ENCODE measurements at regions of chr14 and their contacts with region 1.

Region 1: GRCh38 chr14:76151398-76152339 is at the start of gene GPATCH2L:
- DNase-seq: peak; percentile 90 to 98 (median 95)
- ATAC-seq: peak; percentile 96
- H3K4me3 ChIP-seq: peak within 1 kb of the TSS; percentile 91
- H3K4me3 Mint-ChIP-seq: peak within 1 kb of the TSS; percentile 89 to 98 (median 95)
- H3K27ac ChIP-seq: peak within 1 kb of the TSS; percentile 95
- H3K27ac Mint-ChIP-seq: peak within 1 kb of the TSS; percentile 86 to 98 (median 96)
- H3K4me1 ChIP-seq: peaks cover 40 to 44% of the 10 kb centered on the region in 2 donors
- H3K4me1 Mint-ChIP-seq: peaks cover 40 to 56% (median 53%) of the 10 kb centered on the region in 7 donors
- H3K27me3 ChIP-seq: no peaks in the 10 kb centered on the region
- H3K27me3 Mint-ChIP-seq: peaks cover 0 to 18% (median 0%) of the 10 kb centered on the region in 5 donors
- total RNA-seq, gene GPATCH2L: 60.4 to 83.1 (median 66.6) TPM

Region 2: GRCh38 chr14:75577729-75578101 is 574.0 kb before region 1 on chr14:
- CTCF ChIA-PET with region 1: no interaction called
- POLR2A ChIA-PET with region 1: no interaction called
- intact Hi-C with region 1: loop called in 1 of 2 experiments (anchors 5 kb)
- DNase-seq: peak; percentile 45 to 71 (median 54)
- ATAC-seq: peak; percentile 92
- H3K4me3 ChIP-seq: peak overlapping the region; percentile 64
- H3K4me3 Mint-ChIP-seq: peak overlapping the region in 5 of 10 donors; percentile 90 to 96 (median 93)
- H3K27ac ChIP-seq: peak overlapping the region; percentile 41
- H3K27ac Mint-ChIP-seq: peak overlapping the region; percentile 34 to 86 (median 75)
- H3K4me1 ChIP-seq: peaks cover 9 to 12% of the 10 kb centered on the region in 2 donors
- H3K4me1 Mint-ChIP-seq: peaks cover 6 to 19% (median 9%) of the 10 kb centered on the region in 7 donors
- H3K27me3 ChIP-seq: no peaks in the 10 kb centered on the region
- H3K27me3 Mint-ChIP-seq: peaks cover 0 to 8% (median 0%) of the 10 kb centered on the region in 5 donors

Region 3: DNA sequence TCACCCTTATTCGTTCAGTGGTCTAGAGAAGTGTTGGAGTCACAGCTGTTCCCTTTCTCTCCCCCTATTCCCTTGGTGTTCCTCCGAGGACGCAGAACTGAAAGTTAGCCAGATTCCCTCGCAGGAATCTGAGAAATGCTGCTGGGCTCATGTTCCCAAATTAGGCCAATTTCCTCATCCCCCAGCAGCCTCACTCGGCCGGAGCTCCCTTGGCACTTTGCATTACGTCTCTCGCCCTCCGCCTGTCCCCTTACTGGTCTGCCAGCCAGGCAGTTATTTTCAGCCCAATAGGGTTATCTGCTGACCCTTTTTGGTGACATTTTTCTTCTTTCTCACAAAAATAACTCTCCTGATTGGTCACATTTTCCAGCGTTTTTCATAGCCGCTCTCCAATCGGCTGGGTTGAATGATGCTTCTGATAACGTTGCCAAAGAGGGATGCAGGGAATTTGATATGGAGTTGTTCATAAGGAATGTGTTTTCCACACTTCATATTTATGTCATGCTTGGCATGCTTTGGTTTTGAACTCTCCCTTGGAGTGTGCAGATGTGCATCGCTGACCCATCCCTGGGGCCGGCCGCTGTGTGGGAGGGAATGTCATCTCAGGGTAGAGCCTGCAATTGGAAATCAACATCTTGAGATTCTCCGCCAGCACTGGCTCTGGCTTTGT is 156.2 kb before region 1 on chr14:
- CTCF ChIA-PET with region 1: no interaction called
- POLR2A ChIA-PET with region 1: no interaction called
- intact Hi-C with region 1: no loop called
- DNase-seq: no peak
- ATAC-seq: no peak
- H3K4me3 ChIP-seq: no peak overlapping the region
- H3K4me3 Mint-ChIP-seq: no peak overlapping the region
- H3K27ac ChIP-seq: no peak overlapping the region
- H3K27ac Mint-ChIP-seq: no peak overlapping the region
- H3K4me1 ChIP-seq: no peaks in the 10 kb centered on the region
- H3K4me1 Mint-ChIP-seq: peaks cover 0 to 5% (median 0%) of the 10 kb centered on the region in 7 donors
- H3K27me3 ChIP-seq: no peaks in the 10 kb centered on the region
- H3K27me3 Mint-ChIP-seq: no peaks in the 10 kb centered on the region

Region 4: DNA sequence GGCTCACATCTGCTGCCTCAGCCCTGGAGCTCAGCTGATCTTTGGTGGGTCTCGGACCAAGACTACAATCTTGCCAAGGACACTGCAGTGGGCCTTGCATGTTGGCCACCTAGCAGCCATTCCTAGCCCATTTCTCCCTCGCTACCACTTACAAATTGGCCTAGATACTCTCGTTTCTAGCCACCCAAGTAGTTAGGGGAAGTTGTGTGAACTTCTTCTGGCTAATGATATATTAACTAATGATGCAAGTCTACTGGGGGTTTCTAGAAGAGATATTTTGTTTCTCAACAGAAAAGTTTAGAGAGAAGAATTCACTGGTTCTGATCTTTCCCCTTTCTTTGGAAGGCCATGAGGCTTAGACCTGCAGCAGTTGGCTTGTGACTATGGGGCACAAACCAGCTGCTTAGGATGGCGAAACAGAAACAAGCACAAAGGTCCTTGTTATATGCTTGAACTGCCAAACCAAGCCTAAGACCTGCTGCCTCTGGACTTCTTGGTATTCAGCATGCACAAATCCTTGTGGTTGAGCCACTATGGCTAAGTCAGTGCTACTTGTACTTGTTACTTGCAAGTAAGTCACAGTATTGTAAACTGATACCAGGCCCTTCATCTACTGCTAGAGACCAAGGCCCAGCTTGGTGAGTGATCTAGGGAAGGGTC is 30.4 kb before region 1 on chr14:
- CTCF ChIA-PET with region 1: no interaction called
- POLR2A ChIA-PET with region 1: no interaction called
- intact Hi-C with region 1: no loop called
- DNase-seq: no peak
- ATAC-seq: no peak
- H3K4me3 ChIP-seq: no peak overlapping the region
- H3K4me3 Mint-ChIP-seq: no peak overlapping the region
- H3K27ac ChIP-seq: no peak overlapping the region
- H3K27ac Mint-ChIP-seq: no peak overlapping the region
- H3K4me1 ChIP-seq: no peaks in the 10 kb centered on the region
- H3K4me1 Mint-ChIP-seq: peaks cover 0 to 4% (median 0%) of the 10 kb centered on the region in 7 donors
- H3K27me3 ChIP-seq: no peaks in the 10 kb centered on the region
- H3K27me3 Mint-ChIP-seq: peaks cover 0 to 18% (median 5%) of the 10 kb centered on the region in 5 donors

Region 5: GRCh38 chr14:76191297-76191696 is 39.6 kb after region 1 on chr14:
- CTCF ChIA-PET with region 1: no interaction called
- POLR2A ChIA-PET with region 1: no interaction called
- intact Hi-C with region 1: loop called in 1 of 2 experiments (anchors 5 kb)
- DNase-seq: no peak
- ATAC-seq: peak; percentile 83
- H3K4me3 ChIP-seq: no peak overlapping the region
- H3K4me3 Mint-ChIP-seq: no peak overlapping the region
- H3K27ac ChIP-seq: no peak overlapping the region
- H3K27ac Mint-ChIP-seq: no peak overlapping the region
- H3K4me1 ChIP-seq: no peaks in the 10 kb centered on the region
- H3K4me1 Mint-ChIP-seq: peaks cover 4 to 27% (median 12%) of the 10 kb centered on the region in 7 donors
- H3K27me3 ChIP-seq: no peaks in the 10 kb centered on the region
- H3K27me3 Mint-ChIP-seq: no peaks in the 10 kb centered on the region

Region 6: GRCh38 chr14:76219873-76220272 is 68.2 kb after region 1 on chr14:
- CTCF ChIA-PET with region 1: no interaction called
- POLR2A ChIA-PET with region 1: no interaction called
- intact Hi-C with region 1: no loop called
- DNase-seq: no peak
- ATAC-seq: no peak
- H3K4me3 ChIP-seq: no peak overlapping the region
- H3K4me3 Mint-ChIP-seq: no peak overlapping the region
- H3K27ac ChIP-seq: no peak overlapping the region
- H3K27ac Mint-ChIP-seq: no peak overlapping the region
- H3K4me1 ChIP-seq: no peaks in the 10 kb centered on the region
- H3K4me1 Mint-ChIP-seq: no peaks in the 10 kb centered on the region
- H3K27me3 ChIP-seq: no peaks in the 10 kb centered on the region
- H3K27me3 Mint-ChIP-seq: peaks cover 0 to 4% (median 0%) of the 10 kb centered on the region in 5 donors

Region 7: GRCh38 chr14:76274324-76274723 is 122.7 kb after region 1 on chr14:
- CTCF ChIA-PET with region 1: no interaction called
- POLR2A ChIA-PET with region 1: no interaction called
- intact Hi-C with region 1: no loop called
- DNase-seq: no peak
- ATAC-seq: no peak
- H3K4me3 ChIP-seq: no peak overlapping the region
- H3K4me3 Mint-ChIP-seq: no peak overlapping the region
- H3K27ac ChIP-seq: no peak overlapping the region
- H3K27ac Mint-ChIP-seq: no peak overlapping the region
- H3K4me1 ChIP-seq: no peaks in the 10 kb centered on the region
- H3K4me1 Mint-ChIP-seq: no peaks in the 10 kb centered on the region
- H3K27me3 ChIP-seq: no peaks in the 10 kb centered on the region
- H3K27me3 Mint-ChIP-seq: peaks cover 5 to 44% (median 13%) of the 10 kb centered on the region in 5 donors

Region 8: GRCh38 chr14:76761136-76761959 is 609.7 kb after region 1 on chr14 and contains the start of gene VASH1:
- CTCF ChIA-PET with region 1: no interaction called
- POLR2A ChIA-PET with region 1: no interaction called
- intact Hi-C with region 1: loop called in 1 of 2 experiments (anchors 10 kb)
- DNase-seq: peak in 7 of 9 donors; percentile 8 to 77 (median 25)
- ATAC-seq: peak; percentile 85
- H3K4me3 ChIP-seq: peak within 1 kb of the TSS; percentile 61
- H3K4me3 Mint-ChIP-seq: peak within 1 kb of the TSS; percentile 71 to 88 (median 82)
- H3K27ac ChIP-seq: no peak within 1 kb of the TSS
- H3K27ac Mint-ChIP-seq: peak within 1 kb of the TSS in 2 of 9 donors; percentile 44 to 91
- H3K4me1 ChIP-seq: peaks cover 0 to 5% of the 10 kb centered on the region in 2 donors
- H3K4me1 Mint-ChIP-seq: peaks cover 5 to 25% (median 10%) of the 10 kb centered on the region in 7 donors
- H3K27me3 ChIP-seq: peaks cover 0 to 5% of the 10 kb centered on the region in 2 donors
- H3K27me3 Mint-ChIP-seq: peaks cover 0 to 65% (median 26%) of the 10 kb centered on the region in 5 donors
- total RNA-seq, gene VASH1: 1.1 to 18.2 (median 5.6) TPM

Region 9: GRCh38 chr14:76977793-76978720 is 826.4 kb after region 1 on chr14:
- CTCF ChIA-PET with region 1: no interaction called
- POLR2A ChIA-PET with region 1: no interaction called
- intact Hi-C with region 1: loop called in 1 of 2 experiments (anchors 5 kb)
- DNase-seq: peak; percentile 40 to 90 (median 65)
- ATAC-seq: peak; percentile 97
- H3K4me3 ChIP-seq: no peak overlapping the region
- H3K4me3 Mint-ChIP-seq: peak overlapping the region in 7 of 10 donors; percentile 1 to 57 (median 35)
- H3K27ac ChIP-seq: peak overlapping the region; percentile 50
- H3K27ac Mint-ChIP-seq: peak overlapping the region; percentile 29 to 88 (median 82)
- H3K4me1 ChIP-seq: peaks cover 12 to 15% of the 10 kb centered on the region in 2 donors
- H3K4me1 Mint-ChIP-seq: peaks cover 0 to 25% (median 16%) of the 10 kb centered on the region in 7 donors
- H3K27me3 ChIP-seq: no peaks in the 10 kb centered on the region
- H3K27me3 Mint-ChIP-seq: no peaks in the 10 kb centered on the region

Region 10: DNA sequence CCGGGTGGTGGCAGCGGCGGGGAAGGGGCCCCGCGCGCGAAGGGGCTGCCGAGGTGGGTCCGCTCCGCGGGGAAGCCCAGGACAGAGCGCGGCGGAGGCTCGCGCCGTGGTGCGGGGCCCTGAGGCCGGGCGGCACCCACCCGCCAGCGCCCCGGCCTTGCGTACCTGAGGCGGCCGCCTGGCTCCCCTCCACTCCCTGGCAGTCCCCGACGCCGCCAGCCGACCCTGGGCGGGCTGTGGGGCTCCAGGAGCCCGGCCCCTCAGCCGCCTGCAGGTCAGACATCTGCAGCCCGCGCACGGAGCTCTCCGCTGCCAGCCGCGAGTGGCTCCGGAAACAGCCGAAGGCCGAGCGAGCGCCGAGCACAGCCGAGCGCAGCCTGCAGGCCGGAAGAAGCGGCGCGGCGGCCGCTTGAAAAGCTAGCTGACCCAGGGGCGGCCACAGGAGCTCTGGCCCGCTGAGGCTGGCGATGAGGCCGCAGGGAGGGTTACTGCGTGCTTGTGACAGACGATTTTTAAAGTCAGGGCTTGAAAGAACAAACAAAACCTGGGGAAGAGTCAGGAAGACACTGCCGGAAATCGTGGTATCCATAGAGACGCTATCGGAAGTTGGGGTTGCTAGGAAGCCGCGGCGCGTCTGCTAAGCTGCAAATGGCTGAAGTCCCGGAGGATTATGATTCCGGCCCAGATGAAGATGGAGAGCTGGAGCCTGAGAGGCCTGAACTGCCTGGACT is 1225.3 kb after region 1 on chr14 and contains the starts of genes SAMD15 and TMED8:
- CTCF ChIA-PET with region 1: no interaction called
- POLR2A ChIA-PET with region 1: no interaction called
- intact Hi-C with region 1: loop called in 1 of 2 experiments (anchors 5 kb)
- DNase-seq: peak; percentile 77 to 88 (median 83)
- ATAC-seq: peak; percentile 96
- H3K4me3 ChIP-seq: peak within 1 kb of the TSS; percentile 99
- H3K4me3 Mint-ChIP-seq: peak within 1 kb of the TSS in 7 of 10 donors; percentile 88 to 97 (median 93)
- H3K27ac ChIP-seq: peak within 1 kb of the TSS; percentile 87
- H3K27ac Mint-ChIP-seq: peak within 1 kb of the TSS; percentile 52 to 93 (median 77)
- H3K4me1 ChIP-seq: peaks cover 14 to 18% of the 10 kb centered on the region in 2 donors
- H3K4me1 Mint-ChIP-seq: peaks cover 17 to 41% (median 39%) of the 10 kb centered on the region in 7 donors
- H3K27me3 ChIP-seq: no peaks in the 10 kb centered on the region
- H3K27me3 Mint-ChIP-seq: peaks cover 0 to 10% (median 0%) of the 10 kb centered on the region in 5 donors
- total RNA-seq, gene SAMD15: 0.27 to 0.46 (median 0.42) TPM in 3 of 5 experiments, not detected in the others
- total RNA-seq, gene TMED8: 5.5 to 18.6 (median 7.0) TPM